Dorsolateral prefrontal cortex (tissue), 120 donors: ENCODE measurements at regions of chr21 and their contacts with region 1.

Region 1: DNA sequence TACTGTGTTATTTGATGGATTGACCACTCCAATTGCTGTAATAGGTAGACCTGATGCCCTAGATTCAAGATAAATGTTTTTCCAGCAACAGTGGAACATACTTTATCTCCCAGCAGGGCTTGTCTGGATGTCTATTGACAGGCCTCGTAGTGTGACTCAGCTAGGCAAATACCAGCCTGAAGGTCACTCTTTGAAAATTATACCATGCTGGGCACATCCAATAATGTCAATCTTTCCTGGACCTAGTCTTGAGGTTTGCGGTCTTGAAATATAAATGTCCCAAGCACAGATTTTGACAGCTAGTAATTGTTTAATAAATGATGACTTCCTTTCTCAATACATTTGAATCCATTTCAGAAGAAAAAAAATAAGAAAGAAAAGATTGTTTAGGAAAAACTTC is 1138.0 kb upstream of the TMPRSS15 start:
- DNase-seq: no peak
- H3K4me3 ChIP-seq: no peak overlapping the region
- H3K27ac ChIP-seq: no peak overlapping the region
- H3K27me3 ChIP-seq: no peaks in the 10 kb centered on the region
- CTCF ChIP-seq: no peak

Region 2: GRCh38 chr21:19440792-19441655 is 100.6 kb before region 1 on chr21:
- intact Hi-C with region 1: loop called in 1 of 2 experiments (anchors 5 kb)
- DNase-seq: no peak
- H3K4me3 ChIP-seq: no peak overlapping the region
- H3K27ac ChIP-seq: no peak overlapping the region
- H3K27me3 ChIP-seq: no peaks in the 10 kb centered on the region
- CTCF ChIP-seq: no peak